PC-3 (cell line): ENCODE measurements at regions of chr2 and their contacts with region 1.

Region 1: DNA sequence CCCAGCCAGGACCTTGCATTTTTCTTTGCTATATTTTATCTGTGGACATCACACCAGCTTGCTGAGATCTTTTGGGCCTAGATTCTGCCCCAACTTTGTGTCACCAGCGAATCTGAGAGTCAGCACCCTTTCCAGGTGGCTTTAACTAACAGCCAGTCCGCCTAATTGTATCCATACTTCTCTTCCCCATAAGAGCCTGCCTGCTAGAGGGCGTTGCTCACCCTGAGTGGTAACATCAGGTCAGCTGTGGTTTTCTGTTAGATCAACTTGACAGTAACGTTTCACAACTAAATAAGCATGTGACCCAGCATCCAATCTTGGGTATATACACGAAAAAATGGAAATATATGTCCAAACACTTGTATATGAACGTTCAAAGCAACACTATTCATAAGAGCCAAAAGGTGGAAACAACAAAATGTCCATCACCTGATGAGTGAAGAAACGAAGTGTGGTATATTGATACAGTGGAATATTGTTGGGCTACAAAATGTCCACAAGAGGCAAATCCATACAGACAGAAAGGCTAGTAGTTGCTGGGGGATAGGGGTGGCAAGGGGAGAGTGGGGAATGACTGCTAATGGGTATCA is 24.9 kb downstream of the EFHD1 start:
- DNase-seq: peak; percentile 19
- ATAC-seq: peak; percentile 74
- H3K4me3 ChIP-seq: no peak overlapping the region
- H3K27ac ChIP-seq: no peak overlapping the region
- H3K4me1 ChIP-seq: no peaks in the 10 kb centered on the region
- H3K27me3 ChIP-seq: no peaks in the 10 kb centered on the region
- CTCF ChIP-seq: peak; percentile 56

Region 2: GRCh38 chr2:232744963-232745362 is 86.7 kb after region 1 on chr2:
- CTCF ChIA-PET with region 1: no interaction called
- POLR2A ChIA-PET with region 1: no interaction called
- intact Hi-C with region 1: loop called (anchors 2 kb)
- DNase-seq: peak; percentile 79
- ATAC-seq: peak; percentile 97
- H3K4me3 ChIP-seq: no peak overlapping the region
- H3K27ac ChIP-seq: peak overlapping the region; percentile 31; the same call in 1 of the 2 replicates
- H3K4me1 ChIP-seq: peaks cover 18% of the 10 kb centered on the region
- H3K27me3 ChIP-seq: no peaks in the 10 kb centered on the region
- CTCF ChIP-seq: no peak